ENCODE measurements at regions of chr1 and their contacts with region 1.

Region 1: DNA sequence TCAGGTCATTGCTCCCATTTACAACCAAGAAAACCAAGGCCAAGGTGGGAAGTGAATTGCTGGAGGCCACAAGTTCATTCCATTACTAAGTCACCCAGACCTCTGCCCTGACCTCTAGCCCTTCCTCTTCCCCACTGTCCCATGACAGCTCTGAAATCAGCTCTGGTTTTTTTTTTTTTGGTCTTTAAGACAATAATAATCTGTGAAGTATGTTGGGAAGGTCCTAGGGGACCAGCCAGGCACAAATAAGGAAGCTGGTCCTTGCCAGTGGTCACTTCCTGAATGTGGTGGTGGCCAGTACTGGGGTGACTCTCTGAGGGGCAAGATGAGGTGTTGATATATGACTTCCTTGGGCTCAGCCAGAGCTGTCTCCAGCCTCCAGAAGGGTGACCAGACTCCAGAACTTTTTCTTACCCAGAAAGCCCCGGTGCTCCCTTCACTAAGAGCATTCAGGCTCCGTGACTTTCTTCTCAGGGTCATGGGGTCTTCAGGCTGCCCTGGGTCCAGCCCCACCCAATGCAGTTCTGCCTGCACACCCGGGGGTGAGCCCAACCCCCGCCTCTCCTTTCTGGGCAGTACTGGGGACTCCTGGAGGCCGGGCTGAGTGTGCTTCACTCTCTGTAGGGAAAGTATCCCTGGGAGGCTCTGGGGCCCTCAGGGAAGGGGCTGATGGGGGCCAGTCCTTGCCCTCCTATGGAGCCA is 159.6 kb downstream of the PTPRU start:
- DNase-seq: no peak
- ATAC-seq: no peak
- H3K4me3 ChIP-seq: no peak overlapping the region
- H3K4me1 ChIP-seq: no peaks in the 10 kb centered on the region
- CTCF ChIP-seq: no peak

Region 2: DNA sequence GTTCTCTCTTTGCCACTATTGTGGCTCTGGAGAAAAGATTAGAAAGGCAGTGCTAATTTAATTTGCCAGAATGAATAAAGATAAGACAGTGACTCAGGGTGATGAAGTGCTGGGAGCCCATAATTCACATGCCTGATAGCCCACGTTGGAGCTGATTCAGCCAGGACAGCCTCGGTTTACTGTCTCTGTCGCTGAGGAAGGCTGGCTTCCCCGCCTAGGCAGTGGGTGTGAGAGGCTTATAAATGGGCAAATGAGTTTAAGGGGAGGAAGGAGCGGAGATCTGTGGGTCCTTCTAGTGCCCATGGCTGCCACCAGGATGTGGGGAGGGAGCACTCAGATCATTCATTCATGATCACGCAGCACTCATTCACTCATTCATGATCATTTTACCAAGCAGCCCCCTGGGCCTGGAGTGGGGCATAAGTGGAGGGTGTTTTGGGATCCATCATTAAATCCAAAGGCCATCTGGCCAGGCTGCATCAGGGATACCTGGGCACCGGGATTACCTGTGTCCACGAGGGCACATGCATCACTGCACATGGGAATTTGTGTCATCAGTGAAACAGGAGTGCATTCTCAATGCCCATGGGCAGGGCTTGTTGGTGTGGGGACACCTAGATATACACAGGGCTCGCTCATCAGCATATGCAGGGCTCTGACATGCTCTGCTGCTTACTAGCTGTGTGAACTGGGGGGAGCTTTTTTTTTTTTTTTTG is 1012.1 kb after region 1 on chr1:
- intact Hi-C with region 1: loop called in 1 of 2 experiments (anchors 2 kb)
- DNase-seq: no peak
- ATAC-seq: no peak
- H3K4me3 ChIP-seq: no peak overlapping the region
- H3K4me1 ChIP-seq: no peaks in the 10 kb centered on the region
- CTCF ChIP-seq: no peak